Cardiac septum (tissue), 1 donor: ENCODE measurements at regions of chr6 and their contacts with region 1.

Region 1: GRCh38 chr6:134347916-134348805 is 30.2 kb upstream of the SGK1 start:
- DNase-seq: no peak

Region 2: GRCh38 chr6:134480593-134480992 is 132.4 kb after region 1 on chr6:
- intact Hi-C with region 1: loop called (anchors 10 kb)
- DNase-seq: no peak

Region 3: GRCh38 chr6:134822920-134823709 is 475.0 kb after region 1 on chr6:
- intact Hi-C with region 1: loop called (anchors 10 kb)
- DNase-seq: no peak